ENCODE measurements at regions of chr19 and their contacts with region 1.

Region 1: DNA sequence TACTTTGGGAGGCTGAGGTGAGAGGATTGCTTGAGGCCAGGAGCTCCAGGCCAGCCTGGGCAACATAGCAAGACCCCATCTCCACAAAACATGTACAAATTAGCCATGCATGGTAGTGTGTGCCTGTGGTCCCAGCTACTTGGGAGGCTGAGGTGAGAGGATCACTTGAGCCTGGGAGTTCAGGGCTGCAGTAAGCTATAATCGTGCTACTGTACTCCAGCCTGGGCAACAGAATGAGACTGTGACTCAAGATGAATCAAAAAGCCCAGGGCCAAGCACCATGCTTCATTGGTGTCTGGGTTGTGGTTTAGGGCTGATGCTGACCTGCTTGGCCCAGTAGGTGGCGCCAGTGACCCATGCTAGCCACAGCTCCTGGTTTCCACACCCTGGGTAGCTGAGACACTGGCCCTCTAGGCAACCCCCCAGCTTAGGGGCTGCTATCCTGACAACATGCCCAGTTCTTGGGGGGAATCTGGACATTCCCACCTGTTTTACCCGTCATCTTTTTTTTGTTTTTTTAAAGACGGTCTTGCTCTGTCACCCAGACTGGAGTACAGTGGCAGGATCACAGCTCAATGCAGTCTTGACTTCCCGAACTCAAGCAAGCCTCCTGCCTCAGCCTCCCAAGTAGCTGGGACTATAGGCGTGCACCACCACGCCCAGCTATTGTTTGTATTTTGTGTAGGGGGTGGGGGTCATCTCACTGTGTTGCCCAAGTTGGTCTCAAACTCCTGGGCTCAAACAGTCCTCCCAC is 5.5 kb downstream of the CCDC124 start:
- DNase-seq: peak; percentile 69
- H3K4me3 Mint-ChIP-seq: no peak overlapping the region
- H3K27ac Mint-ChIP-seq: no peak overlapping the region
- H3K4me1 Mint-ChIP-seq: peaks cover 5% of the 10 kb centered on the region
- H3K27me3 Mint-ChIP-seq: no peaks in the 10 kb centered on the region

Region 2: DNA sequence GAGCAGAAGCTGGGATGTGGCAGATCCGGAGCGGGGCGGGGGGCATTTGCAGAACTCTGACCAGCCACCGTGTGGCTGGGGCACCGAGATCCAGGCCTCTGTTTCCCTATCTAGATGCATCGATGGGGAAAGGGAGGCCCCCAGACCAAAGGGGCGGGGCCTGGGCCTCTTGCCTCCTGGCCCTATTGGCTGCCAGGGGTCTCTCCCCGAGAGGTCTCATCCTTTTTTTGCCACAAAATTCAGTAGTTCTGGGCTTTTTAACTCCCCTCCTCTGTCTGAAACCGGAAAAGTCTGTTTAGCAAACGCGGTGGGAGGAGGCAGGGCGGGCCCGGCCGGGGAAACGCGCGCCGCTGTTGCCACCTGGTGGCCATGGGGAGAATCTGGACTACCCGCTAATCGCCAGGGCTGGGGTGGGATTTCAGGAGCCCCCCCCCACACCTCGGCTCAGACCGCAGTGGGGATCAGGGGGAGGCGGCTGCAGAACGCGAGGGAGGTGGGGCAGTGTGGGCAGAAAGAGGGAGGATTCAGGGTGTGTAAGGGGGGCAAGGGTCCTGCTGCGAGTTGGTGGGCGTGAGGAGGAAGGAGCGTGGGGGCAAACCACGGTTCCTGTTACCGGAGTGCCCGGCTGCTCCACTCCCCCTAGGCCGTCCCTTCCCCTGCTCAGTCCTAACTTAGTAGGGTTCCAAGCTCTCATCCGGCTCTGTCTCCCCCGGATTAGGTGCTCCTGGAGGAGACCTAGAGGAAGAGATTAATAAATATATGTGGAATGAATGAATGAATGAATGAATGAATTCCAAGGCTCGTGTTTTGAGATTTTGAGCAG is 120.2 kb after region 1 on chr19:
- intact Hi-C with region 1: loop called (anchors 5 kb)
- DNase-seq: peak; percentile 68
- H3K4me3 Mint-ChIP-seq: no peak overlapping the region
- H3K27ac Mint-ChIP-seq: peak overlapping the region; percentile 67
- H3K4me1 Mint-ChIP-seq: peaks cover 10% of the 10 kb centered on the region
- H3K27me3 Mint-ChIP-seq: no peaks in the 10 kb centered on the region

Region 3: GRCh38 chr19:18683213-18683939 is 745.1 kb after region 1 on chr19 and contains the start of gene CRTC1:
- intact Hi-C with region 1: no loop called
- DNase-seq: peak; percentile 89
- H3K4me3 Mint-ChIP-seq: peak within 1 kb of the TSS; percentile 84
- H3K27ac Mint-ChIP-seq: peak within 1 kb of the TSS; percentile 83
- H3K4me1 Mint-ChIP-seq: peaks cover 5% of the 10 kb centered on the region
- H3K27me3 Mint-ChIP-seq: peaks cover 2% of the 10 kb centered on the region
- total RNA-seq, gene CRTC1: 6.4 and 7.0 TPM in 2 replicates